Activated T-helper 1 cell treated with anti-CD3 and anti-CD28 coated beads, Interleukin-12 subunit alpha, Interleukin-12 subunit beta, Interleukin-2, Interleukin-4 antibody, amounts not matched to agents 30 ng/mL and 10 ng/mL and 1 ng/mL, durations not matched to agents 14 hours and 24 hours and 36 hours (primary cell): ENCODE measurements at regions of chr3 and their contacts with region 1.

Region 1: DNA sequence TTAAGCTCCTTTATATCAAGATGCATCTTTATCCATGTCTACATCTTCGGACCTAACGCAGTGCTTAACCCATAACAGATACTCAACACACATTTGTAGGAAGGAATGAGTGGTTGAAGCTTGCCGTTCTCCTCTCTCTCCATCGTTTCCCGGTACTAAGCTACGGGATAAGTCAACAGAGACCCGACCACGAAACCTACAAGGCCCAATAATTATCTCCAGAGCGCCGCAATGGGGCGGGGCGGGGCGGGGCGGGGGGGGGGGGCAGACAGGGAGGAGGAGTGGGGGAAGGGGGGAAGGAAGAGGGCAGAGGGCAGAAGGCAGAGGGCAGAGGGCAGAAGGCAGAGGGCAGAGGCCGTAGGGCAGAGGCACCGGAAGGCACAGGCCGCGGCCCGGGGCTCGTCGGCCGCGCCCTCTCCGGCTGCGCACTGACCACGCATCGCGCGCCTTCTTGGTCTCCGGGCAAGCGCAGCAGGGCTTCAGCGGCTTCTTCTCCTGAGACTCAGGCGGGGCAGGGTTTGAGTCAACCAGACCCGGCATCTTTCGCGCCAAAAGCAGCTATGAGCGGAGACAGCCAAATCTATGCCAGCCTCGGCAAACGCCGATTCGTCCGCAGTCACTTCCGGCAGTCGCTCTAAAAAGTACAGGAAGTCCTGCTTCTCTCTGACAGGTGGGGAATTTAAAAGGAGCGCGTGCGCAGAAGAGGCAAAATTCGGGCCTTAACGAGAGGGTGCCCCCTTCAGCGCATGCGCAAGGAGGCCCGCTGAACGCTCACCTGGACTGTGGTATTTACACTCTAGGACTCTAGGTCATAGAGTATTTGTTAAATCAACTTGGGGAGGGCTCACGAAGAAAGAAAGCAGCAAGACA is at the start of gene COX17:
- DNase-seq: peak; percentile 95
- H3K4me3 Mint-ChIP-seq: peak within 1 kb of the TSS; percentile 91
- H3K27ac Mint-ChIP-seq: peak within 1 kb of the TSS; percentile 96
- H3K4me1 Mint-ChIP-seq: peaks cover 44% of the 10 kb centered on the region
- H3K27me3 Mint-ChIP-seq: peaks cover 2% of the 10 kb centered on the region
- total RNA-seq, gene COX17: 62.2 and 70.7 TPM in 2 replicates

Region 2: DNA sequence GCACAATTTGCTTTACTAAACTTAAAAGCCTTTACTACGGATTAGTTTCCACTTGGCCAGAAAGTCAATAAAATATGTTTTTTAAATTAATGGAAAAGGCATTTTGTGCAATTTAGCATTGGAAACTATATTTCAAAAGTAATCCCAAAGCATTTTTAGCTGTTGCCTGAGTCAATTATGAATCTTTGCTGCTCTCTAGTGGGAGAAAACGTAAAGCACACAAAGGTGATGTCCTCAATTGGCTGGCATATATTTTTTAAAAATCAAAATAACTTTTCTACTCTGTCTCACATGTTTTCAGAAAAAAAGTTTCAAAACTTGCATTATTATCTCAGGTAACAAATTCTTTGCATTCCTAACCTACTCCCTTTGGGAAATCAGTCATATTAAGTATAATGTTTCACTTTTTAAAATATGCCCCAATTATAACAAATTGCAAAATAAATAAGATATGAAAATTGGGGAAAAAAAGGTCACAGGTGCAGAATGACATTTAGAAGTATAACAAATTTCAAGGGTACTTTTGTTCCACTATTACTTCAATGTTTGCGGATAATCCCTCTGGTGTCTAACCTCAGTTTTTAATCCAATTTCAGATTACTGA is 578.3 kb before region 1 on chr3:
- intact Hi-C with region 1: loop called (anchors 5 kb)
- DNase-seq: no peak
- H3K4me3 Mint-ChIP-seq: no peak overlapping the region
- H3K27ac Mint-ChIP-seq: no peak overlapping the region
- H3K4me1 Mint-ChIP-seq: no peaks in the 10 kb centered on the region
- H3K27me3 Mint-ChIP-seq: peaks cover 2% of the 10 kb centered on the region

Region 3: DNA sequence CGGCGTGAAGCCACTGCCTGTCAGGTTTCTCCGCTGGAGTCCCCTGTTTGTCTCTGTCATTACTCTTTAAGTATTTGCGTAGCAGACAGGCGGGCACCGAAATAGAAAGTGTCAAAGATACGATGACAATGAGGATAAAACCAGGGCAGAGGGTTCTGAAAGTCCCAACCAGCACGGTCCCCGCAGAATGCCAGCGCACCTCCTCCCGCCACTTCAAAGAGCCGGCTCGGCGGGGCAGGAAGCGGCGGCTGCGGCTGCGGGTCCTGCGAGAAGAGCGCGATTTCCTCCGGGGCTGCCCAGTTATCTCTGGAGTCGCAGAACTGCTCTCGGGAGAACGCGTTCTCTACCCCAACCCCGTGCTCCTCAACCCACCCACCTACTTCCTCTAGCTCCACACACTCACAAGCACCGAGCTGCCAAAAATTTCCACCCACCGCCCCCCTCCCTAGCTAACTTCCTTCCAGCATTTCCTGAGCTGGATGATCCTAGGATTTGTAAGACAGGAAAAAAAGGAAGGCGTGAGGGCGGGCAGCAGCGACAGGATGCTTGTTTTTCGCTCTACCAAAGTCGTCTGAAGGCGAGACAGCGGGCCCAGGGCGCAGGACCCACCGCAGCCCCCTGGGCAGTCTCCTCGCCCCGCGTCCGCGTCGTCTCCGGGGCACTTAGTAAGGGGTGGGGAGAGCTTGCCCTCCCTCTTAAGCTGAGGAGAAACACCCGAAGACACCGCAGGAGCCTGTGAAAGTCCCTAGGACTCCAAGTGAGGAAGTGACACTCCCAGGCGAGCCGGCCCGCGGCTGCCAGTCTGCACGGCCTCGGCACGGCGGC is 382.9 kb before region 1 on chr3 and contains the start of gene ARHGAP31:
- intact Hi-C with region 1: loop called (anchors 1 kb)
- DNase-seq: peak; percentile 82
- H3K4me3 Mint-ChIP-seq: peak within 1 kb of the TSS; percentile 85
- H3K27ac Mint-ChIP-seq: peak within 1 kb of the TSS; percentile 78
- H3K4me1 Mint-ChIP-seq: peaks cover 55% of the 10 kb centered on the region
- H3K27me3 Mint-ChIP-seq: peaks cover 42% of the 10 kb centered on the region
- total RNA-seq, gene ARHGAP31: 7.5 and 8.0 TPM in 2 replicates

Region 4: DNA sequence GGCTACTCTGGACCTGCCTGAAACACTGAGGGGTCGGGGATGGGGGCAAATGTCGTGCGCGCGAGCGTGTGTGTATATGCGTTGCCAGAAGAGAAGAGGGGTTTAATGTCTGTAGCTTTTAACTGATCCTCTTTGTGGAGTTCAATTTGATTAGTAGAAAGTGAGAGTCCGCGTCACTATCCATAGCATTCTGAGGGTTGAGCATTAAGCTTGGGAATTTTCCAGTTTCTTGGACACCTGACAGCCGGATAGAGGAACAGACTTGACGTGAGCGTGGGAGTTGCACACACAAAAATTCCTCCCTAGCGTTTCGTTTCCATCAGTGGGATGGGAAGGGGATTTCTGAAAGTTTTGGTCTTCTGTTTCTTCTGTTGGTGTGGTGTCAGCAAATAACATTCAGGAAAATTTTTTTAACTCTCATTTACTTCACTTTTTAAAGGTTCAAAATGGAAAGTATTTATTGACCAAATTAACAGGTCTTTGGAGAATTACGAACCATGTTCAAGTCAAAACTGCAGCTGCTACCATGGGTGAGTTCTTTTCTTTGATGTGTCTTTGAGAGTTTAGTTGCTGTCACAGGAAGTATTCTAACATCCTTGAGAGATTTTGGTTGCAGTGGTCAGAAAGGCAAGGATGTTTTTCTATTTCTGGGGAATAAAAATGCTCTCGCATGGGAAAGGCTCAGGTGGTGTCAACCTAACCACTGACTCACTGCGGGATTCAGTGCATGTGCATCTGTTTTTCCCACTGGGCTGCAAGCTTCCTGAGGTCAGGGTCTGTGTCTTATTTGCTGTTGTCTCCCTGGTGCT is 207.4 kb before region 1 on chr3:
- intact Hi-C with region 1: loop called (anchors 1 kb)
- DNase-seq: no peak
- H3K4me3 Mint-ChIP-seq: peak overlapping the region; percentile 95
- H3K27ac Mint-ChIP-seq: peak overlapping the region; percentile 93
- H3K4me1 Mint-ChIP-seq: peaks cover 39% of the 10 kb centered on the region
- H3K27me3 Mint-ChIP-seq: no peaks in the 10 kb centered on the region

Region 5: GRCh38 chr3:119579366-119580165 is 97.4 kb before region 1 on chr3 and contains the start of gene ADPRH:
- intact Hi-C with region 1: loop called (anchors 1 kb)
- DNase-seq: peak; percentile 47
- H3K4me3 Mint-ChIP-seq: peak within 1 kb of the TSS; percentile 90
- H3K27ac Mint-ChIP-seq: peak within 1 kb of the TSS; percentile 95
- H3K4me1 Mint-ChIP-seq: peaks cover 37% of the 10 kb centered on the region
- H3K27me3 Mint-ChIP-seq: peaks cover 6% of the 10 kb centered on the region
- total RNA-seq, gene ADPRH: 3.8 and 4.6 TPM in 2 replicates

Region 6: GRCh38 chr3:119647171-119647570 is 29.8 kb before region 1 on chr3:
- intact Hi-C with region 1: no loop called
- DNase-seq: no peak
- H3K4me3 Mint-ChIP-seq: no peak overlapping the region
- H3K27ac Mint-ChIP-seq: no peak overlapping the region
- H3K4me1 Mint-ChIP-seq: peaks cover 16% of the 10 kb centered on the region
- H3K27me3 Mint-ChIP-seq: no peaks in the 10 kb centered on the region

Region 7: DNA sequence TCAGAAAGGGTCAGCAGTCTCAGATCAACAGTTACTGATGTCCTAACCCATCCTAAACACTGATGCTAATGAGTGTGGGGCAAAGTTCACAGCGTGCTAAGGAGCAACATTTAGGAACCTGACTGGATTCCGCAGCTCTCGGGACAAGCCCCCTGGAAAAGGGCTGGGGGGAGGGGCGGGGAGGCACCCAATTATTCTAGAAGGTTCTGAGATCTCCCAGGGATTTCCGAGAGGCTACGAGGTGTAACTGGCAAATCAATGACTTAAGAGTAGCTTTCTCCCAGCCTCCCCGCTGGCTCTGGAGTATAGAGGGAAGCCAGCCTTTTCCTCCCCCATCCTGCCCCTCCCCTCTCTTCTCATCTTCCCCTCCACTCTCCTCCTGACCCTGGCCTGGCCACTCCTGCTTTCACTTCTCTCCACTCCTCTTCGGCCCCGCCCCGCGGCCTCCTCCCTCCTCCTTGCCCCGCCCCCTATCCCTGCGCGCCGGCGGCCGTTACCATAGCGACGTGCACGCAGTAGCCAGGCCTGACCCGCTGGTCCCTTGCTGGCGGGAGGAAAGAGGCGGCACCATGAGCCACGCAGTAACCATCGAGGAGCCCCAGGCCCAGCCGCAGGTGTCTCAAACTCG is 25.6 kb after region 1 on chr3 and contains the start of gene CFAP91:
- intact Hi-C with region 1: loop called (anchors 1 kb)
- DNase-seq: peak; percentile 78
- H3K4me3 Mint-ChIP-seq: peak within 1 kb of the TSS; percentile 67
- H3K27ac Mint-ChIP-seq: no peak within 1 kb of the TSS
- H3K4me1 Mint-ChIP-seq: peaks cover 37% of the 10 kb centered on the region
- H3K27me3 Mint-ChIP-seq: peaks cover 29% of the 10 kb centered on the region
- total RNA-seq, gene CFAP91: 0.24 TPM in 1 of 2 replicates, not detected in the other

Region 8: GRCh38 chr3:119883461-119884160 is 206.6 kb after region 1 on chr3:
- intact Hi-C with region 1: no loop called
- DNase-seq: no peak
- H3K4me3 Mint-ChIP-seq: no peak overlapping the region
- H3K27ac Mint-ChIP-seq: no peak overlapping the region
- H3K4me1 Mint-ChIP-seq: no peaks in the 10 kb centered on the region
- H3K27me3 Mint-ChIP-seq: no peaks in the 10 kb centered on the region